Mammary epithelial cell (primary cell): ENCODE measurements at regions of chr2 and their contacts with region 1.

Region 1: DNA sequence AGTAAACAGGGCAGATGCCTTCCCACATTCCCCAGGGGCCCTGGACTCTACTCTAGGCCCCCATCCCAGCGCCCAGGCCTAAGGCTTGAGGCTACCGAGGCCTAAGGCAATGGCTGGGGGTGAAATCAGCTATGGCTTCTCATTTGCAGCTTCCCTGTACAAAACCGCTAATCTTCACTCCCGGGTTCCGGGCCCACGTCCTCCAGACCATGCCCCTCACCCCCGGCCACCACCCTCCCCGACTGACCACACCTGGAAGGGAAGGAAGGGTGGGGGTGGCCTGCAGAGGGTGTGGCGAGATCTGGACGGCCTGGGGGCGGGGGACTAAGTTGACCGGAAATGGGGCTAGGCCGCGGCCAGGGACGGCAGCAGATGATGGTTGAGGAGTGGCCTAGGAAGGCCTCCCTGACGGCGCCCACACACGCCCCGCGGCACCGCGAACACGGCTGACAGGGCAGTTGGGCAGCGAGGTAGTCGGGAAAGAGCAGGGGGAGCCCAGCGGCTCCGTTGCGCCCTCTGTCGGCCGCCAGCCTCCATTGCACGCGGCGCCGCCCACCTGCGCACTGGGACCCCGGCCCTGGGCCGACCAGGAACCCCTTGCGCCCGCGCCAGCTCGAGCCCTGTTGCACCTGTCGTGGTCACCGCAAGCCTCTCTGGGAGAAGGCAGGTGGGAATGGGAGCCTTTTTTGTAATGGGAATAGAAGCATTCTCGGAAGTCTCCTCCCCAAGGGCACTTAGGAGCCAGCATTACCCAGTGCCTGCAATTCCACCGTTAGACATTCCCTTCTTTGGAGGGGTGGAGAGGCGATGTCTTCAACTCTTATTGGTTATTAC is 117.1 kb upstream of the STPG4 start:
- DNase-seq: peak; percentile 33
- H3K4me3 ChIP-seq: peak overlapping the region in 2 of 3 experiments; percentile 22 to 42
- H3K27ac ChIP-seq: no peak overlapping the region
- H3K4me1 ChIP-seq: peaks cover 36% of the 10 kb centered on the region
- H3K27me3 ChIP-seq: no peaks in the 10 kb centered on the region
- CTCF ChIP-seq: peak; percentile 69 to 96

Region 2: DNA sequence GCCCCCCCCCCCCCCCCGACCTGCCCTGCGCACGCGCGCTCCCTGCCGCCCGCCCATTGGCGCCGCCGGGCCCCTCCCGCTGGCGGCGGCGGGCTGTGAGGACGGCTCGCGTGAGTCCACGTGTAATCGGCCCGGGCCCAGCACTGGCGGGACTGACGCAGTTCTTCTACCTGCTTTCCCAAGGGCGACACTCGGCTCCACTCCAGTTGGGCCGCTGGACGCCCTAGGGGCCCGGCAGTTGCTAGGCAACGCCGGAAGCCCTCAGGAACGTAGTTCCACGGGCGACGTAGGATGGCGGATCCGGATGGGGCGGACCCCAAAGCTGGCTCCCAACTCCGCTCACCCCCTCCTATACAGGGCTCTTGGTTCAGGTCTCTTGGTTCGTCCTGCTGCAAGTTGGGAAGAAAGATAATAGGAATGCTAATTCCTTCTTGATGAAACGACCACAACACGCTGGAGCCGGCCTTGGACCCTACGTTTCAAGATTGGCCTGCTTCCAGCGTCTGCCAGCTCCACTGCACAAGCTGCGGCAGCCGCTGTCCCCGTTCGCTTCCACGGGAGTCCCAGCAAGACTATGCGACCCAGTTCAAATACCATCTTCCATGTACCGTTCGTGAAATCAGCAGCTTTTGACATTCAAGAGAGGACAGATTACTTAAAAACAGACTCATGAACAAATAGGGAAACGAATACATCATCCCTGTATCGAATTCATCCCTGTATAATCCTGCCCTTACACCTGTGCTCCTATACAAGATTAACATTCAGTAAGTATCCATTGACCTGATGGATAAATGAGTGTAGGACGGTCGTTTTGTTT is 356.2 kb before region 1 on chr2:
- CTCF ChIA-PET with region 1: no interaction called
- dilution Hi-C with region 1: no loop called
- in situ Hi-C with region 1: no loop called
- intact Hi-C with region 1: loop called (anchors 5 kb)
- DNase-seq: peak; percentile 87
- H3K4me3 ChIP-seq: peak overlapping the region; percentile 67 to 97 (median 74)
- H3K27ac ChIP-seq: peak overlapping the region; percentile 92
- H3K4me1 ChIP-seq: peaks cover 26% of the 10 kb centered on the region
- H3K27me3 ChIP-seq: no peaks in the 10 kb centered on the region
- CTCF ChIP-seq: no peak

Region 3: DNA sequence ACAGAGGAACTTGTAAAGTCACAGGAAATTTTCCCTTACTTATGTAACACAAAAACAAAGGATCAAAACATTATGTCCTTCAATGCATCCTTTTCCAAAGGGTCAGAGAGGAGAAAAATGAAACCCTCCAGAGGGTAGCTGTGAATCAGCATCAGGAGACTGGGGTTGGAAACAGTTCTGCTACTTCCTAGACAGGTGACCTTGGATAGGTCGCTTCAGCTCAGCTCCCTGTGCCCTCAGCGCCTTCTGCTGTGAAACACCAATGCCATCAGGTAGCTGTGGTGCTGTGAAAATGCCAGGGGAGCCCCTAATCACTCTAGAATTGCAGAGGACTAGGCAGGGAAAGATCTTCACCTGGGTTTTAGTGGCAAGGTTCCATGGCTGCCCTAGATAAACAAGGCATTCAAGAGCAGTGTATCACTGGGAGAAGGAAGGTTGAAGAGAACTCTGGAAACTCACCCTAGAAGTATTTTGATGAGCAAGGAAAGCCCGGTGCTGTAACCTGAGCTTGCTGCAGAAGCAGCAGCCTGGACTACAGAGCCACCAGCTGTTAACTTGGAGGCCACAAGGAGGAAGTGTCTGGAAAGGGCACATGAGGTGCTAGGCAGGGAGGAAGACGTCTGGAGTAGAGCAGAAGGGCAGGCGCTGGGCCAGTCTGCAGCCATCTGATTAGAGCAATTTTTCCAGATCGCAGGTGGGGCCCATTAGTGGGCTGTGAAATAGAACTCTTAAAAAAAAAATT is 255.9 kb before region 1 on chr2:
- CTCF ChIA-PET with region 1: no interaction called
- dilution Hi-C with region 1: no loop called
- in situ Hi-C with region 1: no loop called
- intact Hi-C with region 1: loop called (anchors 5 kb)
- DNase-seq: peak; percentile 80
- H3K4me3 ChIP-seq: no peak overlapping the region
- H3K27ac ChIP-seq: no peak overlapping the region
- H3K4me1 ChIP-seq: peaks cover 5% of the 10 kb centered on the region
- H3K27me3 ChIP-seq: no peaks in the 10 kb centered on the region
- CTCF ChIP-seq: no peak

Region 4: DNA sequence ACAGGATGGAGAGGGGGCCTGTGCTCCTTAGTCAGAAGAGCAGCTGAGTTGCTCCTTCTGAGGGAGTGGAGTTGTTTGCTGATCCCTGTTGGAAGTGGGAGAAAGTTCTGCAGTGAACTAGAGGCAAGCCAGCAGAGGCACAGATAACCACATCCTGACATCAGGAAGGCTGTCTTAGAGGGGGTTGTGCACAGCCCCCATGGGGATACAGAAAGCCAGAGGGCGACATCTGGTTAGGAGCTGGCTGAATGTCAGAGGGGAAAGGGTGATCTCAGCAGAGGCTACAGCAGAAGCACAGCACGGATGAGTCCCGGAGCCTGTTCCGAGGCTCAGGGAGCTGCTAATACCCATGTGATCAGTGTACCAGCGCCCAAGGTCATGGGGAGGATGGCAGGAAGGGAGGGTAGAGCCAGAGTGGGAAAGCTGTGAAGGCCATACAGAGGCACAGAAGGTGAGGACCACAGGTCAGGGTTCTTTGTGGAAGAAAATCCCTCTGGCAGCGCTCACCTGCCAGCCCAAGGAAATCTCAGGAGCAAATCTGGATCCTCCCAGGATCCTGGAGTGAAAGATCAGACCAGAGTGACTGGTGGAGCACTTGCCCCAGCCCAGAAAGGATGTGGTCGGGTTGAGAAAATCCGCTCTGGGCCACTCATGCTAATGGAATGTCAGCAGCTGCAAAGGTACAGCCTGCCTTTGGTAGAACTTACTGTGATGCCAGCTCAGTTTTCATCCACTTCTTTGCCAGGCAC is 228.9 kb before region 1 on chr2:
- CTCF ChIA-PET with region 1: no interaction called
- dilution Hi-C with region 1: no loop called
- in situ Hi-C with region 1: loop called in 1 of 2 experiments (anchors 10 kb)
- intact Hi-C with region 1: no loop called
- DNase-seq: peak; percentile 94
- H3K4me3 ChIP-seq: peak overlapping the region; percentile 10 to 39 (median 15)
- H3K27ac ChIP-seq: peak overlapping the region; percentile 92
- H3K4me1 ChIP-seq: peaks cover 30% of the 10 kb centered on the region
- H3K27me3 ChIP-seq: no peaks in the 10 kb centered on the region
- CTCF ChIP-seq: no peak